SK-MEL-5 (cell line): ENCODE measurements at regions of chr6 and their contacts with region 1.

Region 1: DNA sequence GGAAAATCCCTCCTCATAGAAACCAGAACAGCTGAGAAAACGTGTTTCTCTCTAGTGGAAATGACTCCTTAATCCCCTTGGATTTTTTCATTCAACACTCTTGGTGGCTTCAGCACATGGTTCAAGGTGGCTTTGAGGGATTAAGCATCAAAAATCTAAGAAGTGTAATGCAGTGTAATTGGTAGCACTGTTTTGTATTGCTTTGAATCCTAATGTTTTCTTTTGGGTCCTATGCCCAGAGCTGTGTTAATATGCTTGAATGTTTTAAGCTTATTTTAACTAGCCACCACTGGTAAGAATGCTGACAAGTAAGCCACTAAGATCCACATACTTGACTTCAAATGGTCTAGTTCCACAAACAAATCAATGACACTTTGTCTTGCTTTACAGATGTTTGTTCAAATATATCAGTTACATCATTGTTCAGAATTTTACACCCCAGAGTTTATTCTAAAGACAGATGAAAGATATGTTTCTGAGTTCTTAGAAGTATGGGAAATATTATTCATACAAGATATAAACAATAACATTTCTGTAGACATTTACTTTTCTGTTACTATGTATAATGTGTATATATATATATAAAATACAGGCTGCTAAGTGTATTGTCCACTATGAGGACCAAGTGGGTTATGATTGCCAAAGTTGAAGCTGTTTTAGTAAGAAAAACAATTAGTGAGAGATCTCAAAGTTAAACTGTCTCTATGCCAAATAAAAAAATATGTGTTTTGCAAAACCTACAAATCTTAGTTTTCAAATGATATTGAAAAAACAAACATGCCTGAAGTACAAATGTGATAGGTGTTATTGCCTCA is 220.8 kb downstream of the OGFRL1 start:
- DNase-seq: no peak

Region 2: DNA sequence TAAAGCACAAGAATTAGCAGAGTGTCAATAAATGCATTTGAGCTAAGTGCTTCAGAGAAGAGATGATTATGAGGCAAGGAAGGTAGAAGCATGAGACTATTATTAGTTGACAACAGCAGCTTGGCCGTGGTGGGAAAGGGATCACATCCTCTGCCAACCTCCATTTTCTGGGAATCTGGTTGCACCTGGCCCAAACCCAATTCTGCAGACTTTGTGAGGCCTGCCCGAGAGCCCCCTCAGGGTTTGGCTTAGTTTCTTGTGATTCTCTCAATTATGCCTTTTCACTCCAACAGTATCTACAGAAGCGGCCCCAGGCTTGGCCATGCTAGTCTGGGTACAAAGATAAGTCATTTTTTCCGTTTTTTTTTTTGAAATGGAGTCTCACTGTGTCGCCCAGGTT is 441.6 kb before region 1 on chr6:
- in situ Hi-C with region 1: no loop called
- DNase-seq: no peak

Region 3: DNA sequence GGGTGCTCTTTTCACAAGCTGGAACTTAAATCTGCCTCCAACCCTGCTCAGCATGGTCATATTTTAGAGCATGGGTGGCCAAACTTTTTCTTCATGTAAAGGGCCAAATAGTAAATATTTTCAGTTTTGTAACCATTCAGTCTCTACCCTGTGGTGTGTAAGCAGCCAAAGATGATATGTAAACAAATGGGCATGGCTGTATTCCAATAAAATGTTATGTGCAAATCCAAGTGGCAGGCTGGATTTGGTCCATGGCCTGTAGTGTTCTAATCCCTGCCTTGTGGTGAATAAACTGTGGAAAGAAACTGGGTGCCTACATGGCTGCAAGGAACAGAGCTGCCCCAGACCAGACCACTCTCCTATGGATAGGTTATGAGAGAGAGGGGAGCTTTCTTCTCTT is 188.1 kb before region 1 on chr6:
- in situ Hi-C with region 1: no loop called
- DNase-seq: no peak

Region 4: DNA sequence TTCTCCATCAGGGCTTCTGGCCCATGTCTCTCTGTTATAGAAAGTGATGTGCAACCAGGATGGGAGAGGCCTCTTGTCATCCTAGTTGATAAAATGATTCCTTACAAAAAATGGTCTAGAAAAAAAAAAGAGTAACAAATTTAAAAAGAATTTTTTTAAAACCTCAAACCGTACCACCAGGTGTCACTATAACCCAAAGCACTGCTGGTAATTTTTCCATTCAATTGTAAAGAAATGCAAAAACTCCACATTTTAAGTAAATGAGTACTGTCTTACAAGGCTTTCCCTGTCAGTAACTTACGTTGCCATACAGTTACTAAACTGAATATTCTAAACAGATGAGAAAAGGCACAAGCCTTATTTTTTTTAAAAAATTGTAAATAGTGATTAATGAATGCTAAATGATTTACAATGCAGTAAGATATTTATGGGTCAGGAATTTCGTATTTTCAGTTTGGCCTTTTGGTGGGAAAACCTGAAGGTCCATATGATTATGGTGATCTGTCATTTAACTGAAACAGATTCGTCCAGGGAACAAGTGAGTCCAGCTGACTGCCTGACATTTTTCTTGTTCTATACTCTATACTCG is 125.4 kb before region 1 on chr6:
- in situ Hi-C with region 1: loop called (anchors 10 kb)
- DNase-seq: peak; percentile 60